BJ (cell line): ENCODE measurements at regions of chr19 and their contacts with region 1.

Region 1: DNA sequence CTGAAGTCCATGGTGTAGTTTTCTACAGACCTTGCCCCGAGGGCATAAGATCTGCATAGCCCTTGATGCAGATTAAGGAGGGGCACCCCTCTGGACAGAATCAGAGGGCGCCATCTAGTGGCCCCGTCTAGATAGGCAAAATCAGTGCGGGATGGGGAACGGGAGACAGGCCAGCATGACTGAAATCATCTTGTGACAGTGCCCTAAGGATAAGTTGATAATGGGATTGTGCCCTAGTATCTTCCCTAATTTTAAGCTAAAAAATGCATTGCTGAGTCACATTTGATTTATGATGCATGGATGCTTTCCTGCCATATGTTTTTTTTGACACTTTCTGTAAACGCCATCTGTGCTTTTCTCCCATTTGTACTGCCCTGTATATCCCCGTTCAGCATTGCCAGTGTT is 19.0 kb upstream of the GPI start:
- DNase-seq: no peak
- H3K4me3 ChIP-seq: no peak overlapping the region
- H3K27me3 ChIP-seq: no peaks in the 10 kb centered on the region
- CTCF ChIP-seq: peak; percentile 89

Region 2: GRCh38 chr19:34220472-34221063 is 125.4 kb before region 1 on chr19:
- CTCF ChIA-PET with region 1: interaction called, 10 read pairs
- POLR2A ChIA-PET with region 1: interaction called, 4 read pairs
- DNase-seq: no peak
- H3K4me3 ChIP-seq: no peak overlapping the region
- H3K27me3 ChIP-seq: no peaks in the 10 kb centered on the region
- CTCF ChIP-seq: peak; percentile 79

Region 3: GRCh38 chr19:34359140-34359953 is 13.4 kb after region 1 on chr19:
- CTCF ChIA-PET with region 1: interaction called, 19 read pairs
- POLR2A ChIA-PET with region 1: no interaction called
- DNase-seq: peak; percentile 89
- H3K4me3 ChIP-seq: peak overlapping the region; percentile 25
- H3K27me3 ChIP-seq: no peaks in the 10 kb centered on the region
- CTCF ChIP-seq: peak; percentile 75